ENCODE measurements at regions of chr19 and their contacts with region 1.

Region 1: GRCh38 chr19:48351341-48351752 is 12.4 kb downstream of the TMEM143 start:
- DNase-seq: peak; percentile 63
- ATAC-seq: peak; percentile 49
- H3K4me3 ChIP-seq: no peak overlapping the region
- H3K27ac ChIP-seq: no peak overlapping the region
- H3K4me1 ChIP-seq: peaks cover 67% of the 10 kb centered on the region
- H3K27me3 ChIP-seq: no peaks in the 10 kb centered on the region
- CTCF ChIP-seq: peak; percentile 80
- EP300 ChIP-seq: no peak
- POLR2A ChIP-seq: no peak
- RAD21 ChIP-seq: peak; percentile 73

Region 2: DNA sequence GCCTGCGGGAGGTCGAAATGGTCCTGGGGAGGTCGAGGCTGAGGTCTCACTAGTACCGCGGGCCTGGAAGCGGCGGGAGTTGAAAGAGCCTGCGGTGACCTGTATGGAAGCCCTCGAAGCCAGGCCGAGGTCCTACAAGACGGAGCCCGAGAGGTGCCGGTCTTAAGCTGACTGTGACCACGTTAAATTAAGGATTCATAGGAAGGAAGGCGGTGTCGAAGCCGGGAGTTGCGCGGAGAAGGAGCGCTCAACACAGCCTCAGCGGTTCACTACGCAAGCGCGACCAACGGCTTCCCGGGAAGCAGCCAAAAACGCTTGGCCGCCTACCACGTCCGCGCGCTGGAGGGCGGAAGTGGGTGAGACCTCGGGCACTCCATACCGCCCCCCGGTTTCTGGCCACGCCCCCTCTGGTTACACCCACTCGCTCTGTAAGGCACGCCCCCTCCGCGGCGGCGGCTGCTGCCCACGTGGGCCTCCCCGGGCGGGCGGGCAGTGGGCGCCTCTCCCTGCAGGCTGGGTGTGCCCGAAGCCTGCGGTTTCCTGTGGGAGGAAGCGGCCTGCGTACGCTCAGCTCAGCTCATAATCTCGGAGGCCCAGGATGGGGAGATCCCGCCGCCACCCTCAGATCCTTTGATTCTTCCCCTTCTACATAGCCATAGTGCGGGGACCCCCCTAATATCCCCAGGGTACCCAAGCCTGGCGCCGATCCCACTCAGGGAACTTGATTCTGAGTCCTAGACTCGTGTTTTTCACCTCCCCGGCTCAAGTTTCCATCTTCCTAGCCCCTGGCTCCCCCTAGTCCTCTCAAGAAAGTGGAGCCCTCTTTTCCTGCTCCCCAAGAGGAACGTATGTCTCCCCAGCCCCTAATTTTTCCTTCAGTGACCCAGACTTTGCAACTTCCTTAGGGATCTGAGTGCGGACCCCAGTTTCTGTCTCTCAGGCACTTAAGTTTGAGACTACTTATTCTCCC is 29.4 kb before region 1 on chr19:
- CTCF ChIA-PET with region 1: no interaction called
- POLR2A ChIA-PET with region 1: interaction called, 3 read pairs
- in situ Hi-C with region 1: no loop called
- intact Hi-C with region 1: loop called (anchors 2 kb)
- DNase-seq: peak; percentile 21
- ATAC-seq: peak; percentile 18; the same call in 2 of the 3 replicates
- H3K4me3 ChIP-seq: no peak overlapping the region
- H3K27ac ChIP-seq: no peak overlapping the region
- H3K4me1 ChIP-seq: peaks cover 63% of the 10 kb centered on the region
- H3K27me3 ChIP-seq: no peaks in the 10 kb centered on the region
- CTCF ChIP-seq: 0 out of 2 replicates have a peak, but pooled peaks have one; percentile 4
- EP300 ChIP-seq: no peak
- POLR2A ChIP-seq: no peak
- RAD21 ChIP-seq: no peak

Region 3: GRCh38 chr19:48333467-48334384 is 17.6 kb before region 1 on chr19:
- CTCF ChIA-PET with region 1: no interaction called
- POLR2A ChIA-PET with region 1: interaction called, 10 read pairs
- in situ Hi-C with region 1: no loop called
- intact Hi-C with region 1: no loop called
- DNase-seq: no peak
- ATAC-seq: peak; percentile 8; the same call in 2 of the 3 replicates
- H3K4me3 ChIP-seq: peak overlapping the region; percentile 52 to 76 (median 56)
- H3K27ac ChIP-seq: peak overlapping the region; percentile 59
- H3K4me1 ChIP-seq: peaks cover 17% of the 10 kb centered on the region
- H3K27me3 ChIP-seq: no peaks in the 10 kb centered on the region
- CTCF ChIP-seq: no peak
- EP300 ChIP-seq: no peak
- POLR2A ChIP-seq: no peak
- RAD21 ChIP-seq: no peak

Region 4: GRCh38 chr19:48363810-48364563 is 12.6 kb after region 1 on chr19 and contains the starts of genes SYNGR4 and TMEM143:
- CTCF ChIA-PET with region 1: interaction called, 4 read pairs
- POLR2A ChIA-PET with region 1: interaction called, 107 read pairs
- in situ Hi-C with region 1: no loop called
- intact Hi-C with region 1: no loop called
- DNase-seq: peak; percentile 99
- ATAC-seq: peak; percentile 84
- H3K4me3 ChIP-seq: peak within 1 kb of the TSS; percentile 47 to 86 (median 71)
- H3K27ac ChIP-seq: peak within 1 kb of the TSS; percentile 96
- H3K4me1 ChIP-seq: peaks cover 46% of the 10 kb centered on the region
- H3K27me3 ChIP-seq: no peaks in the 10 kb centered on the region
- CTCF ChIP-seq: no peak
- EP300 ChIP-seq: peak in 1 of 2 experiments; percentile 21; a peak in 1 of 4 replicates
- POLR2A ChIP-seq: peak; percentile 64 to 80
- RAD21 ChIP-seq: no peak
- total RNA-seq, gene SYNGR4: not detected in 2 replicates
- total RNA-seq, gene TMEM143: 4.7 and 7.7 TPM in 2 replicates

Region 5: GRCh38 chr19:48391107-48391986 is 40.0 kb after region 1 on chr19 and contains the start of gene KDELR1:
- CTCF ChIA-PET with region 1: interaction called, 3 read pairs
- POLR2A ChIA-PET with region 1: interaction called, 25 read pairs
- in situ Hi-C with region 1: loop called (anchors 5 kb)
- intact Hi-C with region 1: loop called (anchors 5 kb)
- DNase-seq: peak; percentile 42
- ATAC-seq: peak; percentile 67
- H3K4me3 ChIP-seq: peak within 1 kb of the TSS; percentile 93 to 99 (median 99)
- H3K27ac ChIP-seq: peak within 1 kb of the TSS; percentile 83
- H3K4me1 ChIP-seq: peaks cover 72% of the 10 kb centered on the region
- H3K27me3 ChIP-seq: peaks cover 10 to 34% of the 10 kb centered on the region in 2 experiments; a peak in 4 of 5 replicates
- CTCF ChIP-seq: peak; percentile 89
- EP300 ChIP-seq: no peak
- POLR2A ChIP-seq: peak in 1 of 2 experiments; percentile 73; a peak in 3 of 4 replicates
- RAD21 ChIP-seq: 0 out of 2 replicates have a peak, but pooled peaks have one; percentile 28
- total RNA-seq, gene KDELR1: 70.8 and 134 TPM in 2 replicates

Region 6: GRCh38 chr19:48445606-48446481 is 94.5 kb after region 1 on chr19 and contains the start of gene GRWD1:
- CTCF ChIA-PET with region 1: no interaction called
- POLR2A ChIA-PET with region 1: interaction called, 8 read pairs
- in situ Hi-C with region 1: no loop called
- intact Hi-C with region 1: loop called (anchors 10 kb)
- DNase-seq: peak; percentile 96
- ATAC-seq: peak; percentile 89
- H3K4me3 ChIP-seq: peak within 1 kb of the TSS; percentile 77 to 95 (median 80)
- H3K27ac ChIP-seq: peak within 1 kb of the TSS; percentile 71
- H3K4me1 ChIP-seq: peaks cover 22% of the 10 kb centered on the region
- H3K27me3 ChIP-seq: no peaks in the 10 kb centered on the region; a peak in 1 of 5 replicates
- CTCF ChIP-seq: peak; percentile 41
- EP300 ChIP-seq: no peak
- POLR2A ChIP-seq: peak; percentile 81 to 83
- RAD21 ChIP-seq: peak; percentile 19; the same call in 1 of the 2 replicates
- total RNA-seq, gene GRWD1: 46.6 and 52.3 TPM in 2 replicates

Region 7: DNA sequence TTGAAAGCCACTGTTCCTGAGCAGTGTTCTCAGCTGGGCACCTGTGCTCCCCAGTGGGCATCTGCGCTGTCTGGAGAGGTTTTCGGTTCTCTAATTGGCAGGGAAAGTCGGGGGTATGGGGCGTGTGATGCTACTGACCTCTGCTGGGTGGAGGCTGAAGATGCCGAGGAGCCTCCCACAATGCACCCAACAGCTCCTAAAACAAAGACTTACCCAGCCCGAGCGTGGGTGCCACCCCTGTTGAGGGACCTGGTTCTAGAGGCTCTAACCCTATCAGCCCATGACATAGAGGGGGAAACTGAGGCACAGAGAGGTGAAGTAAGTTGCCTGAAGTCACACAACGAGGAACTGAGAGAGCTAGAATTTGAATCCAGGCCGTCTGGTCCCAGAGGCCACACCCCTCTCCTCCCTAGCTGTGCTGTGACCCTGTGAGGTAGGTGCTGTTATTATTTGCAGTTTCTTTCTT is 257.5 kb after region 1 on chr19:
- CTCF ChIA-PET with region 1: no interaction called
- POLR2A ChIA-PET with region 1: no interaction called
- in situ Hi-C with region 1: no loop called
- intact Hi-C with region 1: no loop called
- DNase-seq: peak; percentile 42
- ATAC-seq: peak; percentile 52
- H3K4me3 ChIP-seq: peak overlapping the region in 1 of 3 experiments; percentile 56; a peak in 2 of 6 replicates
- H3K27ac ChIP-seq: no peak overlapping the region
- H3K4me1 ChIP-seq: peaks cover 21% of the 10 kb centered on the region
- H3K27me3 ChIP-seq: no peaks in the 10 kb centered on the region; a peak in 1 of 5 replicates
- CTCF ChIP-seq: peak; percentile 89
- EP300 ChIP-seq: no peak
- POLR2A ChIP-seq: no peak
- RAD21 ChIP-seq: peak; percentile 75